ENCODE measurements at regions of chr9 and their contacts with region 1.

Region 1: GRCh38 chr9:110623462-110624025 is 44.0 kb upstream of the SVEP1 start:
- DNase-seq: peak; percentile 52
- ATAC-seq: 0 out of 2 replicates have a peak, but pooled peaks have one; percentile 72
- H3K4me3 ChIP-seq: no peak overlapping the region
- H3K27ac ChIP-seq: no peak overlapping the region
- H3K4me1 ChIP-seq: no peaks in the 10 kb centered on the region
- H3K27me3 ChIP-seq: 0 out of 2 replicates have a peak, but pooled peaks cover 3% of the 10 kb centered on the region
- CTCF ChIP-seq: peak; percentile 58; the same call in 1 of the 2 replicates

Region 2: GRCh38 chr9:110183208-110184145 is 440.1 kb before region 1 on chr9:
- CTCF ChIA-PET with region 1: interaction called, 5 read pairs
- POLR2A ChIA-PET with region 1: no interaction called
- in situ Hi-C with region 1: no loop called
- intact Hi-C with region 1: loop called (anchors 5 kb)
- DNase-seq: peak; percentile 50
- ATAC-seq: peak; percentile 91
- H3K4me3 ChIP-seq: no peak overlapping the region
- H3K27ac ChIP-seq: no peak overlapping the region
- H3K4me1 ChIP-seq: no peaks in the 10 kb centered on the region
- H3K27me3 ChIP-seq: no peaks in the 10 kb centered on the region
- CTCF ChIP-seq: peak; percentile 69

Region 3: DNA sequence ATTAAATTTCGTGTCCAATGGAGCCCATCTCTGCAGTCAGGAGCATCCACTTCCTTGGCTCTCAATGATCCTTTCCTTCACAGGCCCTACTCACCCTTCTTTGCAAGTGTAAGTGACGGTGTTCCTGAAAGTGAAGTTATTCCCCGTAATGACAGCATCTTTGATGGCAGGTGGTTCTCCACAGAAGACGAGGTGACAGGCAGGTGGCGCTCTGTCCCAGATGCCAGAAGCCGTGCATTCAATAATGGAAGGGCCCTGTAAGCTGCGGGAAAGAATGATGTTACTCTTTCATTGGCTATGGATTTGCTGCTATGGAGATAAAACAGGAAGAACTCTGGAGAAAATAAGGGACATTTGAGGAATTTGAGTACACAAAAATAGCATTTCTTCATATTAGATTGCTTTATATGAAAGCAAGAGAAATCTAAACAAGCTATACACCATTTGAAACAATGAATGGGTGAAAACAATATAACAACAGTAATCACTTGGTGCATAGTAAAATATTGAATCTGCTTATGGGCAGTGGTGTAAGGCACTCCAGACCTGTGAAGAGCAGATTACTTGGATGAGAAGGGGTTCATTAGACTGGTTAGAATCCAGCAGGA is 195.9 kb before region 1 on chr9:
- CTCF ChIA-PET with region 1: no interaction called
- POLR2A ChIA-PET with region 1: no interaction called
- in situ Hi-C with region 1: no loop called
- intact Hi-C with region 1: loop called (anchors 5 kb)
- DNase-seq: peak; percentile 5
- ATAC-seq: no peak
- H3K4me3 ChIP-seq: no peak overlapping the region
- H3K27ac ChIP-seq: no peak overlapping the region
- H3K4me1 ChIP-seq: no peaks in the 10 kb centered on the region
- H3K27me3 ChIP-seq: no peaks in the 10 kb centered on the region
- CTCF ChIP-seq: peak; percentile 73

Region 4: GRCh38 chr9:111463048-111463447 is 839.5 kb after region 1 on chr9:
- CTCF ChIA-PET with region 1: no interaction called
- POLR2A ChIA-PET with region 1: interaction called, 10 read pairs
- in situ Hi-C with region 1: no loop called
- intact Hi-C with region 1: no loop called
- DNase-seq: no peak
- ATAC-seq: no peak
- H3K4me3 ChIP-seq: no peak overlapping the region
- H3K27ac ChIP-seq: no peak overlapping the region
- H3K4me1 ChIP-seq: peaks cover 8% of the 10 kb centered on the region
- H3K27me3 ChIP-seq: no peaks in the 10 kb centered on the region
- CTCF ChIP-seq: no peak